WTC11 (cell line): ENCODE measurements at regions of chr5 and their contacts with region 1.

Region 1: DNA sequence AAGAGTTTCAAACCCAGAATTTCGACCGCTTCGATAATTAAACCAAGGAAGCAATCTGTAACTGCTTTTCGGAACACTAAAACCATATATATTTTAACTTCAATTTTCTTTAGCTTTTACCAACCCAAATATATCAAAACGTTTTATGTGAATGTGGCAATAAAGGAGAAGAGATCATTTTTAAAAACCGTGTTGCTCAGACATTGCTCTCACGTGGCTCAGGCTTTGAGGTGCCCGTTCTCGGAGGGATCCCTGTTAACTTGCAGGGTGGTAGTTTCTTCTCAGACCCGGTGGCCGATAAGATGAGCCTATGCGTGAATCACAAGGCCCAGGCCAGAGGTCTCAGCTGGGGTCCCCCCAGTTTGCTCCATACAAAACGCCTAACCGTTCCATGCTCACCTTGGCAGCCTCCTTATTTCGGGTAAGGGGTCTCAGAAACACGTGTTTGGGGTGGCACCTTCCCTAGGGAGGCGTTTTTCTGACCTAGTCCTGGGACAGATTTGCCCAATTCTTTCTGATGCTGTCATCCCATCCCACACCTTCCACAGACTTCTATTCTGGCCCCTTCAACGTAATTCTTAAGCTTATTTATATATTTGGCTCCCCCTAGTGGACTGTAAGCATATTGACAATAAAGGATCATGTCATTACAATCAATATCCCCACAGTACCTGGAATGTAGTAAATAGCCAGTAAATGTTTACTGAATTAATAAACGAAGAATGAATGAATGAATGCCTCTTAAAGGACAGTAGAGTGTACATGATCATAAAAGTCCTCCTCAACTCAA is 48.1 kb downstream of the THBS4 start:
- DNase-seq: peak; percentile 25
- ATAC-seq: peak; percentile 66
- H3K4me3 Mint-ChIP-seq: no peak overlapping the region
- H3K27ac Mint-ChIP-seq: no peak overlapping the region
- H3K4me1 Mint-ChIP-seq: peaks cover 11% of the 10 kb centered on the region
- H3K27me3 Mint-ChIP-seq: no peaks in the 10 kb centered on the region
- CTCF ChIP-seq: peak; percentile 43; the same call in 1 of the 2 replicates

Region 2: GRCh38 chr5:79743846-79744605 is 339.3 kb before region 1 on chr5:
- CTCF ChIA-PET with region 1: no interaction called
- POLR2A ChIA-PET with region 1: no interaction called
- DNase-seq: no peak
- ATAC-seq: peak; percentile 65
- H3K4me3 Mint-ChIP-seq: no peak overlapping the region
- H3K27ac Mint-ChIP-seq: no peak overlapping the region
- H3K4me1 Mint-ChIP-seq: peaks cover 35% of the 10 kb centered on the region
- H3K27me3 Mint-ChIP-seq: no peaks in the 10 kb centered on the region
- CTCF ChIP-seq: no peak

Region 3: DNA sequence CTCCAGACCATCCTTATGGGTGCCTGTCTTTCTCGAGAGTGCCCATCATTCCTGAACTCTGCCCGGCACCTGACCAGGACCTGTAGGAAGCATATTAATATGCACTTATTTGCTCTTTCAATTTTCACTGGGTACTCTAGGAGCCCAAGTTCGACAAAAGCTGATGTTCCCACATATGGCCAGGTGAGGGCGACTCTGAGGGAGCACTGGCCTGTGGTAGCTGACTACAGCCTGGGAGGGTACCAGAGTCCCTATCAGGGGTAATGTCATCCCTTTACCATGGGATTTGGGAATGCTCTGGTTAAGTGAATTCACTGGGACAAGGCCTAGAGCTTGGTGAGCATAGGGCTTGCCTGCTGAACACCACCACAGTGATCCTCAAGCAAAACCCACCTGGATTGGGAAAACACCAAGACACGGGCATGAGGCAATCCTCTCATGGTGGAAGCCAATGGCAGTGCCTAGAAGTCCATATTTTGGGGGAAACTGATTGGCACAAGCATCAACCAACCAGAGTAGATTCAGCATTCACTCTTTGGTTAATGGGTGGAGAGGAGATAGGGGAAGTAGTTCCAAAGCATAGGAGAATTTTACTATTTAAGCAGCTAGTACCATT is 204.5 kb before region 1 on chr5:
- CTCF ChIA-PET with region 1: interaction called, 44 read pairs
- POLR2A ChIA-PET with region 1: no interaction called
- DNase-seq: peak; percentile 78
- ATAC-seq: peak; percentile 97
- H3K4me3 Mint-ChIP-seq: no peak overlapping the region
- H3K27ac Mint-ChIP-seq: no peak overlapping the region
- H3K4me1 Mint-ChIP-seq: no peaks in the 10 kb centered on the region
- H3K27me3 Mint-ChIP-seq: peaks cover 2% of the 10 kb centered on the region; the same call in 1 of the 2 replicates
- CTCF ChIP-seq: peak; percentile 66

Region 4: GRCh38 chr5:80041527-80041926 is 41.8 kb before region 1 on chr5:
- CTCF ChIA-PET with region 1: interaction called, 14 read pairs
- POLR2A ChIA-PET with region 1: no interaction called
- DNase-seq: no peak
- ATAC-seq: no peak
- H3K4me3 Mint-ChIP-seq: no peak overlapping the region
- H3K27ac Mint-ChIP-seq: no peak overlapping the region
- H3K4me1 Mint-ChIP-seq: no peaks in the 10 kb centered on the region
- H3K27me3 Mint-ChIP-seq: peaks cover 9% of the 10 kb centered on the region
- CTCF ChIP-seq: no peak

Region 5: DNA sequence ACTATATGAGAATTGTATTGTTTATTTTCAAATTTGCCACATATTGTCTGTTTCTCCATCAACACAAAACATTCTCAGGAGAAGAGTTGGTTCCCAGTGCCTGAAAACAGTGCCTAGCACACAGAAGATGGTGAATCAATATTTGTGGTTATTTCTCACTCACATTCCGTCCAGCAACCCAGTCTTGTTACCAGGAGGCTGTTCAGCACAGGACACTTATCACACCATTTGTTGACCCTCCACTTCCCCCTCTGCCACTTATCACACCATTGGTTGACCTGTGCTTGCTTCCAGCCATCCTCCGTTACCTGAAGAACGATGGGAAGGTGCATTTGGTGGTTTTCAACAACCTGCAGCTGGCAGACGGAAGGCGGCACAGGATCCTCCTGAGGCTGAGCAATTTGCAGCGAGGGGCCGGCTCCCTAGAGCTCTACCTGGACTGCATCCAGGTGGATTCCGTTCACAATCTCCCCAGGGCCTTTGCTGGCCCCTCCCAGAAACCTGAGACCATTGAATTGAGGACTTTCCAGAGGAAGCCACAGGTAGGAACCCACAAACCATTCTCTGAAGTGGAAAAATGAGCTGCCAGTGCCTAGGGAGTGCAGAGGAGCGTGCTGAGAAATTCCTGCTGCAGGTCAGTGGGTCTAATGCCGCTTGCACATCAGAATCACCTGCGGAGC is 27.7 kb before region 1 on chr5:
- CTCF ChIA-PET with region 1: interaction called, 18 read pairs
- POLR2A ChIA-PET with region 1: no interaction called
- DNase-seq: peak; percentile 60
- ATAC-seq: peak; percentile 98
- H3K4me3 Mint-ChIP-seq: peak overlapping the region; percentile 47
- H3K27ac Mint-ChIP-seq: peak overlapping the region; percentile 89
- H3K4me1 Mint-ChIP-seq: peaks cover 10% of the 10 kb centered on the region
- H3K27me3 Mint-ChIP-seq: no peaks in the 10 kb centered on the region
- CTCF ChIP-seq: no peak

Region 6: GRCh38 chr5:80308526-80308925 is 225.2 kb after region 1 on chr5:
- CTCF ChIA-PET with region 1: interaction called, 31 read pairs
- POLR2A ChIA-PET with region 1: no interaction called
- DNase-seq: no peak
- ATAC-seq: peak; percentile 24; the same call in 1 of the 2 replicates
- H3K4me3 Mint-ChIP-seq: no peak overlapping the region
- H3K27ac Mint-ChIP-seq: no peak overlapping the region
- H3K4me1 Mint-ChIP-seq: peaks cover 19% of the 10 kb centered on the region
- H3K27me3 Mint-ChIP-seq: no peaks in the 10 kb centered on the region; the same call in 1 of the 2 replicates
- CTCF ChIP-seq: no peak